PC-3 (cell line): ENCODE measurements at regions of chrX and their contacts with region 1.

Region 1: DNA sequence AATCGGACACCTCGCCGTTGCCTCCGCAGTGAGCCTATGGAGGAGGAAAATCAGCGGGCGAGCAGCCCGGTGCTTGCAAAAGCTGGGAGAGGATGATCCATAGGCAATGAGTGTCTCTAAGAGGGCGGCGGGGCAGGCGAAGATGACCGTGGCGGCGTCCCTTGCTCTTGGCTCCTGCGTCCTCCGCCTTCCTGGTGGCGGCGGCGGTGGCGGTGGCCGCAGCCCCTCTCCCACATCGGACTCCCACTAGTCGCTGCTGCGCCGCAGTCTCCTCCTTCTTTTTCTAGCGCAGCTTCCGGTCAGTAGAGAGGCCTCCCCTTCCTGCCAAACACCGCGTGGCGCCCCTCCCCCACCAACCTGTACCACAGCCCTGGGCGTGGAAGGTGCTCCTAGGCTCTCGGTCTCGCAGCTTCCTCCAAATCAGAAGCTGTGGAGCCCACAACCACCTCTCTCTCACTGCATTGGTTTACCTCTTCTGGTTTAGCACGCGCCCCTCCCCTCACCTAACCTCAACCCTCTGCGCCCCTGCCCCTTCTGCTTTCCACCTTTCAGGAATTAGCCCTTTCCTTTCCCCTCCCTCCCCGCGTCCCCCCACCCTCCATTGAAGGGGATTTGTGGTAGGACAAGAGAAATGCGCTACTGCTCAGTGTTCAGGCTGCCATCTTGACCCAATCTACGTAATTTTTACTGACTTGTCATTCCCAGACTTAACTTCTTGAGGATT is at the start of gene SPIN3:
- DNase-seq: peak; percentile 86
- ATAC-seq: peak; percentile 99
- H3K4me3 ChIP-seq: peak within 1 kb of the TSS; percentile 88
- H3K27ac ChIP-seq: peak within 1 kb of the TSS; percentile 55
- H3K4me1 ChIP-seq: peaks cover 7% of the 10 kb centered on the region; the same call in 1 of the 2 replicates
- H3K27me3 ChIP-seq: no peaks in the 10 kb centered on the region
- CTCF ChIP-seq: no peak
- total RNA-seq, gene SPIN3: 8.4 and 9.0 TPM in 2 replicates

Region 2: DNA sequence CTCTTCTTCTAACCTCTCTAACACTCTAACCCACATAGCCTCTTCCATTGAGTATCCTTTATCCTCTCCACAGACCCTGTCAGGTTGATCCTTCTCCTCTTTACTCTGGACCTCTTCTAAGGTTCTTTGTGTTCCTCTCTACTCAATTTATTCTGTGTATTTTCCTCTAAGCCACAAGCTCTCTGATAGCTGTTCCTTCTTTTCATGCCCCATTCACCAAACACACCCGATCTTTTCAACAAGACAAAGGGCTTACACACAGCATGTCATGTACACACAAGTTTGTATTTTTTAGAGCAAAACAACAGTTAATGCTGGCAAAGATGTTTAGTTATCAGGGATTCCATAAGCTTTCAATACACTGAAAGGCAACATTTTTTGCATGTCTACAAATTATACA is 124.0 kb after region 1 on chrX:
- CTCF ChIA-PET with region 1: no interaction called
- POLR2A ChIA-PET with region 1: no interaction called
- intact Hi-C with region 1: loop called (anchors 10 kb)
- DNase-seq: no peak
- ATAC-seq: no peak
- H3K4me3 ChIP-seq: no peak overlapping the region
- H3K27ac ChIP-seq: no peak overlapping the region
- H3K4me1 ChIP-seq: no peaks in the 10 kb centered on the region
- H3K27me3 ChIP-seq: no peaks in the 10 kb centered on the region
- CTCF ChIP-seq: no peak

Region 3: GRCh38 chrX:57232658-57233360 is 237.4 kb after region 1 on chrX:
- CTCF ChIA-PET with region 1: no interaction called
- POLR2A ChIA-PET with region 1: no interaction called
- intact Hi-C with region 1: no loop called
- DNase-seq: no peak
- ATAC-seq: no peak
- H3K4me3 ChIP-seq: no peak overlapping the region
- H3K27ac ChIP-seq: no peak overlapping the region
- H3K4me1 ChIP-seq: peaks cover 5% of the 10 kb centered on the region
- H3K27me3 ChIP-seq: no peaks in the 10 kb centered on the region
- CTCF ChIP-seq: no peak